Right ventricle myocardium inferior (tissue), 1 donor: ENCODE measurements at regions of chr2 and their contacts with region 1.

Region 1: DNA sequence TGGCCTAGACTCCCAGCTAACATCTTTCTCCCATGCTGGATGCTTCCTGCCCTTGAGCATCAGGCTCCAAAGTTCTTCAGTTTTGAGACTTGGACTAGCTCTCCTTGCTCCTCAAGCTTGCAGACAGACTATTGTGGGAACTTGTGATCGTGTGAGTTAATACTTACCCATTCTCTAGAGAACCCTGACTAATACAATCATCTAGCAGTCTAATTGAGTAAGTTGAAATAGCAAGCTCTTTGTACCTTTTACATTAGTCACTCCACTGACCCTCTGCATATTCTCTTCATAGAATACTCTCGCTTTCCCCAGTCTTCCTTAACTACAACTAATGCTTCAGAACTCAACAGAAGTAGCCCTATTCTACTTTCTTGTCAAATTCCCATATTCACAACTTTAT is 434.6 kb upstream of the NXPH2 start:
- DNase-seq: no peak
- ATAC-seq: no peak

Region 2: GRCh38 chr2:139245270-139245669 is 30.5 kb after region 1 on chr2:
- intact Hi-C with region 1: loop called (anchors 1 kb)
- DNase-seq: no peak
- ATAC-seq: no peak